T-cell (primary cell): ENCODE measurements at regions of chr3 and their contacts with region 1.

Region 1: GRCh38 chr3:192816351-192816750 is 89.0 kb upstream of the FGF12 start:
- DNase-seq: peak in 1 of 35 experiments; percentile 44
- ATAC-seq: no peak
- H3K4me3 ChIP-seq: no peak overlapping the region
- H3K4me3 Mint-ChIP-seq: no peak overlapping the region
- H3K27ac ChIP-seq: no peak overlapping the region
- H3K27ac Mint-ChIP-seq: no peak overlapping the region
- H3K4me1 ChIP-seq: no peaks in the 10 kb centered on the region
- H3K4me1 Mint-ChIP-seq: peaks cover 0 to 35% (median 8%) of the 10 kb centered on the region in 3 donors
- H3K27me3 ChIP-seq: no peaks in the 10 kb centered on the region
- H3K27me3 Mint-ChIP-seq: no peaks in the 10 kb centered on the region

Region 2: GRCh38 chr3:192905994-192906687 is 89.8 kb after region 1 on chr3:
- CTCF ChIA-PET with region 1: no interaction called
- POLR2A ChIA-PET with region 1: interaction called in 1 of 2 experiments, 12 read pairs
- DNase-seq: no peak
- ATAC-seq: no peak
- H3K4me3 ChIP-seq: no peak overlapping the region
- H3K4me3 Mint-ChIP-seq: no peak overlapping the region
- H3K27ac ChIP-seq: no peak overlapping the region
- H3K27ac Mint-ChIP-seq: peak overlapping the region; percentile 17 to 21
- H3K4me1 ChIP-seq: peaks cover 0 to 3% of the 10 kb centered on the region in 2 experiments
- H3K4me1 Mint-ChIP-seq: peaks cover 14 to 38% (median 15%) of the 10 kb centered on the region in 3 donors
- H3K27me3 ChIP-seq: no peaks in the 10 kb centered on the region
- H3K27me3 Mint-ChIP-seq: no peaks in the 10 kb centered on the region

Region 3: DNA sequence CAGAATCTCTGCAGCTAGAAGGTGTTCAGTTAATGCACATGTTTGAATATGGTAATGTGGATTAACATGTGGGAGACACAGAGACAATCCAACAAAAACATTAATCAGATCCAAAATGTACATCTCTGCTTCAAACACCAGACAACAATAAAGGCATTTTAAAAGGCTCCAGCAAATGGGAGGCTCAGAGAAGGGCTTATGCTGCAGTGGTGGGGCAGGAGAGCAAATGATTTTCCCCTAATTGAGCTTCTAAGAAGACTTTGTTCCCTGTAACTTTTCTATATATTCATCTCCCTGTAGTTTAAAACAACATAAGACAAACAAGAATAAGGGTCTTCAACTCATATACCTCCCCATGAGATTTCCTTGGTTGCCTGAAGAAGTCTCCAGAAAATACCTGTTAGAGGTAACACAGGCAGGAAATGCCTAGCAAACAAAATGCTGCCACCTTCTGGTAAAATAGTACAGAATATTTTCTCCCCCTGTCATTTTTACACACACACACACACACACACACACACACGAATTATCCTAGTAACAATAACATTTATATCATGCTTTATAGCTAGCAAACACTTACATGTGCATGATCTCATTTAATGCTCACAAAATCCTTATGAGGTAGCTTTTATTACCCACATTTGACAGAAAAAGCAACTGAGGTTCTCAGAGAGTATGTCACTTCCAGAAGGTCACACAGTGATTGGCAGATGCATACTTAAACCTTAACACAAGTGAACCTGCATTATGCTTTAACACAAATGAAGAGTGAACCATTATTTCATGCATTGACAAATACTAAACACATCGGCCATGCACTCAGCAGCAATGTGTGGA is 224.7 kb after region 1 on chr3:
- CTCF ChIA-PET with region 1: interaction called, 28 to 36 read pairs
- POLR2A ChIA-PET with region 1: no interaction called
- DNase-seq: peak in 6 of 35 experiments; percentile 1 to 42 (median 3)
- ATAC-seq: peak in 1 of 4 experiments; percentile 37
- H3K4me3 ChIP-seq: no peak overlapping the region
- H3K4me3 Mint-ChIP-seq: no peak overlapping the region
- H3K27ac ChIP-seq: no peak overlapping the region
- H3K27ac Mint-ChIP-seq: no peak overlapping the region
- H3K4me1 ChIP-seq: no peaks in the 10 kb centered on the region
- H3K4me1 Mint-ChIP-seq: peaks cover 0 to 2% (median 0%) of the 10 kb centered on the region in 3 donors
- H3K27me3 ChIP-seq: no peaks in the 10 kb centered on the region
- H3K27me3 Mint-ChIP-seq: peaks cover 0 to 7% of the 10 kb centered on the region in 2 donors